PC-9 (cell line): ENCODE measurements at regions of chr2 and their contacts with region 1.

Region 1: GRCh38 chr2:64737547-64737946 is 83.8 kb upstream of the SERTAD2 start:
- DNase-seq: no peak
- H3K4me3 ChIP-seq: no peak overlapping the region
- H3K27ac ChIP-seq: no peak overlapping the region
- H3K4me1 ChIP-seq: no peaks in the 10 kb centered on the region
- H3K27me3 ChIP-seq: no peaks in the 10 kb centered on the region
- CTCF ChIP-seq: no peak

Region 2: GRCh38 chr2:64698668-64699444 is 38.7 kb before region 1 on chr2:
- CTCF ChIA-PET with region 1: no interaction called
- POLR2A ChIA-PET with region 1: interaction called, 11 read pairs
- intact Hi-C with region 1: no loop called
- DNase-seq: peak in 1 of 2 experiments; percentile 41
- H3K4me3 ChIP-seq: no peak overlapping the region
- H3K27ac ChIP-seq: peak overlapping the region; percentile 4; the same call in 1 of the 2 replicates
- H3K4me1 ChIP-seq: peaks cover 10% of the 10 kb centered on the region
- H3K27me3 ChIP-seq: no peaks in the 10 kb centered on the region
- CTCF ChIP-seq: no peak

Region 3: DNA sequence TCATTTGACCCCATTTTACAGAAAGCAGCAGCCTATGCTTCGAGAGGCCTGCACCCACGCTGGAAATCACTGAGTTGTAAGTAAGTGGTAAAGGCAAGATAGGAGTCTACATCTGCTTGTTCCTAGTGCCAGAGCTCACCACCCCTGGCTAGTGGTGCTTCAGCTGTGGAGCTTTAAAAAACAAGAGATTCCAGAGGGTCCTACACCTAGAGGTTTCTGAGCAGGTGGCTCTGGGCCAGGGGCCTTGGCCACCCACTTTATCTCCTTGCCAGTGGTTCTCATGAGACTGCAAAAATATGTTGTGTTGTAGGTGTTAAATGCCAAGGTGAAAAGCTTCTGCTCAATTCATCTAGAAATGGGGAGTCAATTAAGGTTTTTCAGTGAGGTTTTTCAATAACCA is 23.9 kb before region 1 on chr2:
- CTCF ChIA-PET with region 1: no interaction called
- POLR2A ChIA-PET with region 1: no interaction called
- intact Hi-C with region 1: no loop called
- DNase-seq: no peak
- H3K4me3 ChIP-seq: no peak overlapping the region
- H3K27ac ChIP-seq: no peak overlapping the region
- H3K4me1 ChIP-seq: no peaks in the 10 kb centered on the region
- H3K27me3 ChIP-seq: no peaks in the 10 kb centered on the region
- CTCF ChIP-seq: no peak

Region 4: GRCh38 chr2:64797881-64798575 is 60.5 kb after region 1 on chr2:
- CTCF ChIA-PET with region 1: no interaction called
- POLR2A ChIA-PET with region 1: no interaction called
- intact Hi-C with region 1: no loop called
- DNase-seq: peak; percentile 63 to 90
- H3K4me3 ChIP-seq: peak overlapping the region; percentile 12; the same call in 1 of the 2 replicates
- H3K27ac ChIP-seq: peak overlapping the region; percentile 30
- H3K4me1 ChIP-seq: peaks cover 63% of the 10 kb centered on the region
- H3K27me3 ChIP-seq: no peaks in the 10 kb centered on the region
- CTCF ChIP-seq: no peak